ENCODE measurements at regions of chr7 and their contacts with region 1.

Region 1: GRCh38 chr7:2431260-2431867 is 28.0 kb downstream of the CHST12 start:
- DNase-seq: peak; percentile 51 to 85
- H3K4me3 ChIP-seq: no peak overlapping the region
- H3K27ac ChIP-seq: no peak overlapping the region
- H3K4me1 ChIP-seq: no peaks in the 10 kb centered on the region; a peak in 1 of 7 replicates
- H3K27me3 ChIP-seq: no peaks in the 10 kb centered on the region
- CTCF ChIP-seq: peak; percentile 77 to 95 (median 93)
- EP300 ChIP-seq: no peak
- POLR2A ChIP-seq: no peak
- RAD21 ChIP-seq: peak; percentile 77 to 81

Region 2: GRCh38 chr7:2373124-2373556 is 58.2 kb before region 1 on chr7:
- CTCF ChIA-PET with region 1: interaction called, 21 read pairs
- POLR2A ChIA-PET with region 1: no interaction called
- DNase-seq: no peak
- H3K4me3 ChIP-seq: no peak overlapping the region
- H3K27ac ChIP-seq: no peak overlapping the region
- H3K4me1 ChIP-seq: no peaks in the 10 kb centered on the region
- H3K27me3 ChIP-seq: no peaks in the 10 kb centered on the region; a peak in 1 of 7 replicates
- CTCF ChIP-seq: peak in 1 of 3 experiments; percentile 6; a peak in 1 of 4 replicates
- EP300 ChIP-seq: no peak
- POLR2A ChIP-seq: peak in 1 of 2 experiments; percentile 8; a peak in 1 of 3 replicates
- RAD21 ChIP-seq: no peak

Region 3: DNA sequence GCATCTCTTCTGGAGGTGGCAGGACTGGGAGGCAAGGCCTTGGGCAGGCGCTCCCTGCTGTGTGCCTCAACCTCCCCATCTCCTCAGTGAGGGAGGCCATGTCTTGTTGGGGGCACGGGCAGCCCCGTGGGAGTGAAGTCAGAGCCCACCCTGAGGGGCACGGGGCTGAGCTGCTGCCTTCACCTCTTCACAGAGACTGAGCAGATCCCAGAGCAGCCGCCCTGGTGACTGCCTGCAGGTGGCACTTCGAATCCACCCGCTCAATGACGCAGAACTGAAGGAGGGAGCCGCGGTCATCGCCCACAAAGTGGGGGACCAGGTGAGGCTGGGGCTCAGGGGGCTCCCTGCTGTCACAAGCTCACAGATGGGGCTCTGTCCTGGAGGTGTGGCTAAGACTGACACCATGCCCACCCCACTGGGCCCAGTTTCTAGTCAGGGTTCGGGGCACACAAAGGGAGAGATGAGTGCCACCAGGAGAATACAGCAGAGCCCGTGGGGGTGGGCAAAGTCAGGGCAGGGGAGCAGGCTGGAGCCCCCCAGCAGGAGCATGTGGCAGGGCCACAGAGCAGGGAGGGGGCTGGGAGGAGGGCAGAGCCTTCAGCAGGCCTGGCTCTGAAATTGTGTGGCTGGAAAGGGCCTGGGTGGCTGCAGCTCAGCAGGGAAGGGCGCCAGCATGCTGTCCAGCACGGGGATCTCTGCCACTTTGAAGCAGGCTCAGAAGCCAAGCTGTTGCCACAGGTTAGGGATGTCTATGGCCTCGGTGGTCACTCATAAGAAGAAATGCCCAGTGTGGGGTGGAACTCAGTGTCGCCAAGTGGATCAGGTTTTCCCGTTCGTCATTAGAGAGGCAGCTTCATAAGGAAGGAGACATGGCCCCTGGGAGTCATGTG is 46.8 kb before region 1 on chr7:
- CTCF ChIA-PET with region 1: interaction called, 34 read pairs
- POLR2A ChIA-PET with region 1: interaction called, 4 read pairs
- DNase-seq: no peak
- H3K4me3 ChIP-seq: no peak overlapping the region
- H3K27ac ChIP-seq: no peak overlapping the region
- H3K4me1 ChIP-seq: peaks cover 0 to 5% (median 0%) of the 10 kb centered on the region in 4 experiments; a peak in 1 of 7 replicates
- H3K27me3 ChIP-seq: no peaks in the 10 kb centered on the region
- CTCF ChIP-seq: peak in 2 of 3 experiments; percentile 33; a peak in 2 of 4 replicates
- EP300 ChIP-seq: no peak
- POLR2A ChIP-seq: no peak
- RAD21 ChIP-seq: peak; percentile 46 to 64

Region 4: GRCh38 chr7:2403014-2403717 is 28.2 kb before region 1 on chr7 and contains the start of gene CHST12:
- CTCF ChIA-PET with region 1: interaction called, 11 read pairs
- POLR2A ChIA-PET with region 1: interaction called, 3 read pairs
- DNase-seq: peak; percentile 83 to 97
- H3K4me3 ChIP-seq: peak within 1 kb of the TSS; percentile 72 to 95 (median 82)
- H3K27ac ChIP-seq: no peak within 1 kb of the TSS
- H3K4me1 ChIP-seq: peaks cover 2 to 8% (median 4%) of the 10 kb centered on the region in 4 experiments
- H3K27me3 ChIP-seq: no peaks in the 10 kb centered on the region
- CTCF ChIP-seq: no peak
- EP300 ChIP-seq: no peak
- POLR2A ChIP-seq: peak in 1 of 2 experiments; percentile 55; a peak in 2 of 3 replicates
- RAD21 ChIP-seq: no peak
- total RNA-seq, gene CHST12: 13.4 and 18.2 TPM in 2 replicates

Region 5: DNA sequence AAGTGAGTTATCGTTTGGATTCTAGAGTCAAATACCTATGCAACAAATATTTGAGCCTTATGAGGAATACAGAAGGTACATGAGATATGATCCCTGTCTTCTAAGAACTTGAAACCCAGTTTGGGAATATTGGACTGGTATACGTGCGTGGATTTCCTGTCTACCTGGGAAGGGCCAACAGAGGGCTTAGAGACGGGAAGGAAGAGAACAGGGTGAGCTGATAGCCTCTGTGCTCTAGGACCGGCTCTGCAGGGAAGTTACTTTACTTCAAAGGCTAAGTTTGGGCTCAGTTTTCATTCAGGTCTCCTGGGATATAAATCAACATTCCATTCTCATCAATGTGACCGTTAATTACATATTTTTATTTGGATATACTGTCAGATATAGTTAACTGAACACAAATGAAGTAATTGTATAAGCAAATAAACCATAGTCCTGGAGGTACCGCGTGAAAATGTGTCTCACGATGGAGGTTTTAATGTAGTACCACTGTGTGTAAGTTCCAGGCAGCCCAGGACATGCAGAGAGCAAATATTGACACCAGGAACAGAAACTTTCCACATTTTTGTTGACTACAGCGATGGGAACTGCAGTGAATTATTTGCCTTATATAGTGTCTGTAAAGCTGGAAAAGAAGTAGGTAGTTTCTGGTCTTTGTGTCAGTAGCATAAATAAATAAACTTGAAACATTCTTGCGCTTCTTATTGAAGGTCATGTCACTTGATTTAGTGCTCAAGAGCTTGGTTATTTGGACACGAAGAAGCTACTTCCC is 19.4 kb before region 1 on chr7:
- CTCF ChIA-PET with region 1: interaction called, 79 read pairs
- POLR2A ChIA-PET with region 1: interaction called, 6 read pairs
- DNase-seq: no peak
- H3K4me3 ChIP-seq: no peak overlapping the region
- H3K27ac ChIP-seq: no peak overlapping the region
- H3K4me1 ChIP-seq: peaks cover 0 to 2% (median 0%) of the 10 kb centered on the region in 4 experiments; a peak in 2 of 7 replicates
- H3K27me3 ChIP-seq: no peaks in the 10 kb centered on the region
- CTCF ChIP-seq: no peak
- EP300 ChIP-seq: no peak
- POLR2A ChIP-seq: no peak
- RAD21 ChIP-seq: no peak

Region 6: DNA sequence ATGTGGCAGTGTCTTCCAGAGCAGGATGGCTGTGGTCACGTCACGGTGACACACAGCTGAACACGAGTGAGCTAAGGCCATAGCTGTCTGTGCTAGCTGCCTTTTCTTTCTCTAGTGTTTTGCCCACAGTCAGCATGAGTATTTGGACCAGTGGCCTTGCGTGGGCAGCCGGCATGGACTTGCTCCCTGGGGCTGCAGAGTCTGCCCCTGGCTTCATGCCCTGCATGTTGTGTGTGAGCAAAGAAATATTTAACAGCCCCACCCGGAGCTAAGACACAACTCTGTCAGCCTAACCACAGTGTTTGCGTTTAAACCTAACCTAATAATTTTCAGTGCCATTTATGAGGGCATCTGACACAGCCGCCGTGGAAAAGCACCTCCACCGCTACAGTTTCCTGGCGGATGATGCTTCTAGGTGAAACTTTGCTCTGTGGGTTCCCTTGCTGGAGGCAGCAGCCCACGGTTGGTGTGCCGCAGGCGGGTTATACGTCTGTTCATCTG is 13.3 kb before region 1 on chr7:
- CTCF ChIA-PET with region 1: interaction called, 79 read pairs
- POLR2A ChIA-PET with region 1: interaction called, 6 read pairs
- DNase-seq: no peak
- H3K4me3 ChIP-seq: no peak overlapping the region
- H3K27ac ChIP-seq: no peak overlapping the region
- H3K4me1 ChIP-seq: no peaks in the 10 kb centered on the region; a peak in 1 of 7 replicates
- H3K27me3 ChIP-seq: no peaks in the 10 kb centered on the region
- CTCF ChIP-seq: no peak
- EP300 ChIP-seq: no peak
- POLR2A ChIP-seq: no peak
- RAD21 ChIP-seq: no peak

Region 7: DNA sequence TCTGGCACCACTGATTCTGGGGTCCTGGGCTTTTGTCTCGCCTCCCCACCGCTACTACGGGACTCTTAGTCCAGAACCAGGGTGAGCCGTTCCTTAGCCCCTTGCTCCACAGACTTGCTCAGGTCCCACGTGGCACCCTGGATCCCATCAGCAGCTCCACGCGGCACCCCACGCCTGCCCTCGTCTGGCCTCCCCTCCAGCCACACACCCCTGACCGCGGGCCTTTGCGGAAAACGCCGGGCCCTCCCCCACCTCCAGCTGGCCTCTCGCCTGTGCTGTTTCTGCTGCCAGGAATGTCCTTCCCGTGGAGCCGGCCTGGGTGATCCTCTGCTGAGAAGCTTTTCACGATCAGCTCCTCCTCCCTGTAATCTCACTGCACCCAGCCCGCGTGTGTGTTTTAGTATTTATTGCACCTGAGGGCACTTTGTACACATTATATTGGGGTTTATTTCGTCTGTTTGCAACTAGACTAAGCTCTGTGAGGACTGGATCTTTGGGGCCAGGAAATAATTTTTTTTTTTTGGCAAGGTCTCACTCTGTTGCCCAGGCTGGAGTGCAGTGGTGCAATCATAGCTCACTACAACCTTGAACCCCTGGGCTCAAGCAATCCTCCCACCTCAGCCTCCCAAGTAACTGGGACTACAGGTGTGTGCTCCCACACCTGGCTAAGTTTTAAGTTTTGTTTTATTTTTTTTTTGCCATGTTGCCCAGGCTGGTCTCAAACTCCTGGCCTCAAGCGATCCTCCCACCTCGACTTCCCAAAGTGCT is 189.9 kb after region 1 on chr7:
- CTCF ChIA-PET with region 1: no interaction called
- POLR2A ChIA-PET with region 1: no interaction called
- DNase-seq: peak in 1 of 2 experiments; percentile 70
- H3K4me3 ChIP-seq: peak overlapping the region in 1 of 4 experiments; percentile 23; a peak in 1 of 8 replicates
- H3K27ac ChIP-seq: no peak overlapping the region
- H3K4me1 ChIP-seq: peaks cover 0 to 37% (median 23%) of the 10 kb centered on the region in 4 experiments; a peak in 6 of 7 replicates
- H3K27me3 ChIP-seq: 0 out of 7 replicates have a peak, but pooled peaks cover 0 to 2% (median 0%) of the 10 kb centered on the region in 4 experiments
- CTCF ChIP-seq: no peak
- EP300 ChIP-seq: no peak
- POLR2A ChIP-seq: no peak
- RAD21 ChIP-seq: no peak